ENCODE measurements at regions of chr5 and their contacts with region 1.

Region 1: GRCh38 chr5:64811050-64811640 is 42.4 kb downstream of the CWC27 start:
- DNase-seq: peak; percentile 18
- H3K4me3 ChIP-seq: no peak overlapping the region
- H3K27ac ChIP-seq: no peak overlapping the region
- H3K4me1 ChIP-seq: no peaks in the 10 kb centered on the region
- H3K27me3 ChIP-seq: no peaks in the 10 kb centered on the region
- CTCF ChIP-seq: peak; percentile 70

Region 2: DNA sequence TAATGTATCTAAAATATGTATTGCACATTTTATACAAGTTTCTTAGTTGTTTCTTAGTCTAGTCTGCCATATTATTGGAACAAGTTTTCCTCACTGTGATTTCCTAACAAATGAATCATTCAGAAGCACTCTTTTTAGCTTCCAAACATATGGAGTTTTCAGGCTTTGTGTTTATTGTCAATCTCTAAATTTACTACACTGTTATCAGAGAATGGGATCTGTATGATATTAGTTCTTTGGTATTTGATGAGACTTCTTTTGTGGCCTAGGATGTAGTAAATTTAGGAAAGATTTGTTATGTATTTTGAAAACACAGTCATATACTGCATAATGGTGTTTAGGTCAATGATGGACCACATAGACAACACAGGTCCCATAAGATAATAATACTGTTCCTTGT is 68.3 kb before region 1 on chr5:
- intact Hi-C with region 1: no loop called
- DNase-seq: no peak
- H3K4me3 ChIP-seq: no peak overlapping the region
- H3K27ac ChIP-seq: no peak overlapping the region
- H3K4me1 ChIP-seq: no peaks in the 10 kb centered on the region
- H3K27me3 ChIP-seq: no peaks in the 10 kb centered on the region
- CTCF ChIP-seq: no peak

Region 3: DNA sequence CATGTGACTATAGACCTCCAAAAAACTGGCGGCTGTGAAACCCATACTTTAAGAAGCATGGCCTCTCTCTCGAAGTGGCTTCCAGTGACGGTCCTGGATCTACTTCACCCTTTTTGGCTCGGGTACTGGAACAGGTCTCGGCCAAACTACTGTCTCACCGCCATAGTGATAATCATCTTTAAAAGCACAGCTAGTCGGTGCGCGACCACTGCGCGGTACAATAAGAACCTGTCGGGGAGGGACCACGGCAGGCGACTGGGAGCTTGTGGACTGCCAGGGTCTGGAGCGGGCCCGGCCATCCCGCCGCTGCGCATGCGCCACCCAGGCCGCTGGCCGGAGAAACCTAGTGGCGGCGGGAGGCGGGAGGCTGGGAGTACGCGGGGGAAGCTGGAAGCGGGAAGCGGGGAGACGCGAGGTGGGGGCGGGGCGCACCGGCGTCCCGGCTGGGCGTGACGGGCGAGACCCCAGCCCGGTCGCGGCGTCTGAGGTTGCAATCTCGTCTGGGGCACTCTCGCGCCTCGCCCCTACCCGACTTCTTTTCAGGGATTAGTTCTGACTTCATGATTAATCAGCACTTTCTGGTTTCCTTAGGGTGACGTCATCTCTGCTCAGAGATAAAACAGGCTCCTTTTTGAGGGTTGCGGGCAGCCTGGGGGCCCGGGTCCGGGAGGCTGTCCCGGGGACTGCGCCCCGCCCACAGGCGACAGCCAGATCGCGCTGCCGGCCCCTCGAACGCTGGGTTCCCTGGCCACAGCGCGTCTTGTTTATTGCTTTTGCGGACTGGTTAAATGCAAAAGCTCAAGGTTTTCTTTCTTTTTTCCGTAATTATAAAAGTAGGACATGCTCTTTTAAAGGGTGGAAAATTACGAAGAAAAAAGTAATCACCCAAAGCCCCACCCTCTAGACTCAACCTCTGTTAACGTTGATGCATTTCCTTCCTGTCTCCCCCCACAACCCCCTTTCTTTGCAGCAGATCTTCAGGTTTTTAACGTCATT is 224.4 kb after region 1 on chr5:
- intact Hi-C with region 1: loop called (anchors 10 kb)
- DNase-seq: peak; percentile 87
- H3K4me3 ChIP-seq: peak overlapping the region; percentile 61
- H3K27ac ChIP-seq: peak overlapping the region; percentile 64
- H3K4me1 ChIP-seq: no peaks in the 10 kb centered on the region
- H3K27me3 ChIP-seq: no peaks in the 10 kb centered on the region
- CTCF ChIP-seq: no peak

Region 4: GRCh38 chr5:65102828-65103711 is 291.9 kb after region 1 on chr5:
- intact Hi-C with region 1: loop called (anchors 10 kb)
- DNase-seq: peak; percentile 57
- H3K4me3 ChIP-seq: peak overlapping the region; percentile 58
- H3K27ac ChIP-seq: peak overlapping the region; percentile 66
- H3K4me1 ChIP-seq: no peaks in the 10 kb centered on the region
- H3K27me3 ChIP-seq: no peaks in the 10 kb centered on the region
- CTCF ChIP-seq: no peak

Region 5: DNA sequence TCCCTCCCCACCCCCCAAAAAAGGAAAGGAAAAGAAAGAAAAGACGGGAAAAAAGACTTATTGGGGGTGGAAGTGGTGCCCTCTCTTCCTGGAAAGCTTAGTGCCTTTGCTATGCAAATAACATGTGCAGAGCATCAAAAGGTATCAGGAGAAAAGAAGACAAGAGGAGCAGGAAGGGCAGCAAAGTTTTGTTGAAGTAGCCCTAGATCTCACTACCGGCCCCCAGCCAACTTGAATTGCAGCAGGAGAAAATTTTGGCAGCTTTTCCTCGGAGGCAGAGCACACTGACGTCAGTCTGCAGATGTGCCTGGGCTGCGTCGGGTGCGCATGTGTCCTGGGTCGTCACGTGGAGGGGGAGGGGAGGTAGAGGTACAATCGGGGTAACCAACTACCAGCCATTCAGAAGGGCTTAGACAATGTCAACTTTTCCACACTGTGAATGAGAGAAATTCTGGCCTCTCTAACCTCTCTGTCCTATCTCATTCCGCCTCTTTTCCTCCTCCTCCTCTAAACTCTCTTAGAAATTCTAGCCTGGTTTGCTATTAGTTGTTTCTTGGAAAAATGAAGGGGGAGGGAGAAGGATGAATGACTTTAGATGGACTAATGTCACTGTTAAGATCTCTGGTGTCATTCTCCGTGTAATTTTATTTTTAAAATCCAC is 670.6 kb after region 1 on chr5 and contains the start of gene ADAMTS6:
- intact Hi-C with region 1: loop called (anchors 5 kb)
- DNase-seq: peak; percentile 92
- H3K4me3 ChIP-seq: peak within 1 kb of the TSS; percentile 49
- H3K27ac ChIP-seq: peak within 1 kb of the TSS; percentile 73
- H3K4me1 ChIP-seq: peaks cover 3% of the 10 kb centered on the region
- H3K27me3 ChIP-seq: no peaks in the 10 kb centered on the region
- CTCF ChIP-seq: no peak
- total RNA-seq, gene ADAMTS6: 0.12 to 0.77 TPM

Measured in colonic mucosa (tissue), 4 donors.